AG04450 (cell line): ENCODE measurements at regions of chr6 and their contacts with region 1.

Region 1: DNA sequence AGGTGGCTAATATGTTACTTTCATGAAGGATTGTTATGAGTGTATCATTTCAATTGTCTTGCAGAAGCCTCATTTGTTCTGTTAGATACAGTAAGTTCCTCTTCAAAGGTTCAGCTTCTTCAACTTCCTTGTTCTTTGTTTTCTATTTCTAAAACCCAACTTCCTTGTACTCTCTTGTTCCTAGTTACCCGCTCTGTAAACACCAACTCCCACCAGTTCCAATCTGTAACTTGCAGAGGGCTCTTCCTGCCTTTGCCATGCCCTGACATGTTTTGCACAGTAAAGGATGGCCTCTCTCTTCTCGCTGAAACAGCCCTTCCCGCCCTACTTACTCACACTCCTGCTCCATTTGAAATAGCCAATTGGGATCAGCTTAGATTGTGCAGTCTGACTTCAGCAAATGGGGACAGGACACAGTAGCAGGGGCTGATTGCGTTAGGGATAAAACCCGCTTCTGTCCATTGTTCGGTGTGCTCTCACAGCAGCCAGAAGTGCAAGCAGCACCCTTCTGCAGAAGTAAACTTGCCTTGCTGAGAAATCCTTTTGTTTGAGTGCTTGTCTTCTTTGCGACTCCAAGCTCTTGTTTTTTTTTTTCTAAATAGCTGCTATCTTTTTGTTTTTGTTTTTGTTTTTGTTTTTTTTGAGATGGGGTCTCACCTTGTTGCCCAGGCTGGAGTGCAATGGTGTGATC is 45.9 kb upstream of the POU5F1 start:
- DNase-seq: no peak
- H3K4me3 ChIP-seq: no peak overlapping the region
- H3K27ac ChIP-seq: no peak overlapping the region
- H3K27me3 ChIP-seq: peaks cover 6% of the 10 kb centered on the region
- CTCF ChIP-seq: no peak

Region 2: GRCh38 chr6:31128093-31128676 is 88.2 kb before region 1 on chr6:
- CTCF ChIA-PET with region 1: interaction called, 12 read pairs
- POLR2A ChIA-PET with region 1: no interaction called
- DNase-seq: no peak
- H3K4me3 ChIP-seq: no peak overlapping the region
- H3K27ac ChIP-seq: no peak overlapping the region
- H3K27me3 ChIP-seq: peaks cover 13% of the 10 kb centered on the region
- CTCF ChIP-seq: peak; percentile 88

Region 3: GRCh38 chr6:31186052-31186734 is 30.2 kb before region 1 on chr6:
- CTCF ChIA-PET with region 1: no interaction called
- POLR2A ChIA-PET with region 1: no interaction called
- DNase-seq: no peak
- H3K4me3 ChIP-seq: no peak overlapping the region
- H3K27ac ChIP-seq: no peak overlapping the region
- H3K27me3 ChIP-seq: no peaks in the 10 kb centered on the region
- CTCF ChIP-seq: no peak